CD4-positive, alpha-beta memory T cell (primary cell): ENCODE measurements at regions of chr3 and their contacts with region 1.

Region 1: GRCh38 chr3:128316481-128316891 is 150.2 kb downstream of the DNAJB8 start:
- DNase-seq: peak; percentile 79 to 86 (median 82)
- H3K4me3 ChIP-seq: peak overlapping the region in 1 of 2 donors; percentile 12
- H3K4me3 Mint-ChIP-seq: peak overlapping the region; percentile 4 to 73 (median 56)
- H3K27ac ChIP-seq: peak overlapping the region; percentile 40
- H3K27ac Mint-ChIP-seq: peak overlapping the region; percentile 78 to 97 (median 88)
- H3K4me1 ChIP-seq: peaks cover 68% of the 10 kb centered on the region
- H3K4me1 Mint-ChIP-seq: peaks cover 37 to 78% (median 52%) of the 10 kb centered on the region in 4 donors
- H3K27me3 ChIP-seq: no peaks in the 10 kb centered on the region
- H3K27me3 Mint-ChIP-seq: no peaks in the 10 kb centered on the region

Region 2: GRCh38 chr3:128242818-128243601 is 73.5 kb before region 1 on chr3:
- CTCF ChIA-PET with region 1: interaction called, 3 read pairs
- POLR2A ChIA-PET with region 1: no interaction called
- intact Hi-C with region 1: loop called (anchors 2 kb)
- DNase-seq: peak in 3 of 5 donors; percentile 5 to 12 (median 9)
- H3K4me3 ChIP-seq: peak overlapping the region in 1 of 2 donors; percentile 9
- H3K4me3 Mint-ChIP-seq: peak overlapping the region in 7 of 8 donors; percentile 20 to 61 (median 54)
- H3K27ac ChIP-seq: peak overlapping the region; percentile 10
- H3K27ac Mint-ChIP-seq: peak overlapping the region in 6 of 7 donors; percentile 40 to 92 (median 60)
- H3K4me1 ChIP-seq: peaks cover 11% of the 10 kb centered on the region
- H3K4me1 Mint-ChIP-seq: peaks cover 14 to 33% (median 16%) of the 10 kb centered on the region in 4 donors
- H3K27me3 ChIP-seq: no peaks in the 10 kb centered on the region
- H3K27me3 Mint-ChIP-seq: no peaks in the 10 kb centered on the region

Region 3: GRCh38 chr3:128297401-128298138 is 18.9 kb before region 1 on chr3:
- CTCF ChIA-PET with region 1: interaction called, 9 read pairs
- POLR2A ChIA-PET with region 1: interaction called, 14 read pairs
- intact Hi-C with region 1: loop called (anchors 1 kb)
- DNase-seq: no peak
- H3K4me3 ChIP-seq: no peak overlapping the region
- H3K4me3 Mint-ChIP-seq: peak overlapping the region in 1 of 8 donors; percentile 26
- H3K27ac ChIP-seq: no peak overlapping the region
- H3K27ac Mint-ChIP-seq: peak overlapping the region in 5 of 7 donors; percentile 57 to 90 (median 57)
- H3K4me1 ChIP-seq: peaks cover 48% of the 10 kb centered on the region
- H3K4me1 Mint-ChIP-seq: peaks cover 35 to 49% (median 41%) of the 10 kb centered on the region in 4 donors
- H3K27me3 ChIP-seq: no peaks in the 10 kb centered on the region
- H3K27me3 Mint-ChIP-seq: no peaks in the 10 kb centered on the region

Region 4: DNA sequence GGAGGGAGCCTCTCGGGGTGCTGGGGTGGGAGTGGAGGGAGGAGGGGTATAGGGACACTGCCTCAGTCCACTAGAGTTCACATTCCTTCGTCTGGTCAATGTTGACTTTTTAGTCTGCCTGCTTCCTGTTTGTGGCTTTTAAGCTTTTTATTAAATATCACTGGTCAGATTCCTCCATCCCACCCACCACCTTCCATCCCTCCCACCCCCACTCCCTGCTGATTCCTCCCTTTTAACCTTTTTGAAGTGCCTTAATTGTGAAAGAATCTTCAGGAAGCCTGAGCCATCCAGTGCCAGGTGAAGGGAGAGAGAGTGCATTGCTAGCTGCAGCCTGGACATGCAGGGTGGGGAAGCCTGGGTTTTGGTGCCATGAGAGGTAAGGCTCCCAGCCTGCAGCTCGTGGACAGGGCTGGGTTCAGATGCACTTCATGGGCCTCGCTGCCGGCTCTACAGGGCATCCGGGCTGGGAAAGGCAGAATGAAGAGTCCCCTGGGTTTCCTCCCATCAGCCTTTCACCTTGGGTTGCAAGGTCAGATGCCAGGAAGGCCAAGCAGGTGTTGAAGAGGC is 44.3 kb after region 1 on chr3:
- CTCF ChIA-PET with region 1: no interaction called
- POLR2A ChIA-PET with region 1: no interaction called
- intact Hi-C with region 1: no loop called
- DNase-seq: no peak
- H3K4me3 ChIP-seq: no peak overlapping the region
- H3K4me3 Mint-ChIP-seq: no peak overlapping the region
- H3K27ac ChIP-seq: no peak overlapping the region
- H3K27ac Mint-ChIP-seq: peak overlapping the region in 1 of 7 donors; percentile 24
- H3K4me1 ChIP-seq: no peaks in the 10 kb centered on the region
- H3K4me1 Mint-ChIP-seq: peaks cover 0 to 2% (median 0%) of the 10 kb centered on the region in 4 donors
- H3K27me3 ChIP-seq: no peaks in the 10 kb centered on the region
- H3K27me3 Mint-ChIP-seq: no peaks in the 10 kb centered on the region